Caco-2 (cell line): ENCODE measurements at regions of chr12 and their contacts with region 1.

Region 1: DNA sequence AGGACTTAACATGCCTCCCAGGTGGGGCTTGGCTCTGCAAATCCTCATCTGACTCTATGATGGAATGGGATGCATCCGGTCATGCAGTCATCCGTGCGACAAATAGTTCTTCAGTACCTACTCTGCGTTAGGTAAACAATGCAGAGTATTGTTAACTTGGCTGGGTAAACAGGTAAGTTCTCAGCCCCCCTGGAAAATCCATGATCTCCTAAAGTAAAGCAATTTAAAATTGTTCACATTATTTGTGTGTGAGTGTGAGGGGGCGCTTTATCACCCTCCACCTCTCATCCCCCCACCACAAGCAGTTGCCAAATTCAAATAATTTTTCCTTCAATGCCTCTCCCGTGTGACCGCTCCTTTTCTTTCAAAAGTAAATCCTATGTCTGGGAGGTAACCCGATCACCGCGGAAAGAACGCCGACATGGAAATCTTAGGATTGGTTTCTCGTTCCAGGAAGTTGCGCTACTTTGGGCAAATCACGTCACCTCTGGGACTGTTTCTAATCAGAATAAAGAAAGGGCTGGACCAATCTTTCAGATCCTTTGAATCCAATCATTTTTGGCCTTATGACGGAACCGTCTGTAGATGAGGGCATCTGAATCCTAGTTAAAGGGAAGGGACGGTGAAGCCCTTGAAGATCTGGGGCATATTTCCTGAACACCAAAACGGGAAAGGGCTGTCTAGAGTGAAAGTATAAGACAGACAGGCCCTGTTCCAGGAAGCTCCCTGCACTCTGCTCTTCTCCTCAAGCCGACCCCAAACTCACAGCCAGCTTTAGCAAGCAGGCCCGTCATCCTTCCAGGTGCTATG is 44.0 kb upstream of the SINHCAF start:
- DNase-seq: peak; percentile 72 to 75
- H3K4me3 ChIP-seq: peak overlapping the region; percentile 27
- H3K4me3 Mint-ChIP-seq: peak overlapping the region; percentile 70
- H3K27ac Mint-ChIP-seq: peak overlapping the region; percentile 100
- H3K4me1 ChIP-seq: peaks cover 26% of the 10 kb centered on the region
- H3K4me1 Mint-ChIP-seq: peaks cover 43% of the 10 kb centered on the region
- H3K27me3 ChIP-seq: no peaks in the 10 kb centered on the region
- H3K27me3 Mint-ChIP-seq: no peaks in the 10 kb centered on the region
- CTCF ChIP-seq: no peak

Region 2: GRCh38 chr12:31228811-31229792 is 140.8 kb before region 1 on chr12:
- CTCF ChIA-PET with region 1: no interaction called
- POLR2A ChIA-PET with region 1: no interaction called
- intact Hi-C with region 1: no loop called
- DNase-seq: peak in 1 of 2 experiments; percentile 39
- H3K4me3 ChIP-seq: no peak overlapping the region
- H3K4me3 Mint-ChIP-seq: no peak overlapping the region
- H3K27ac Mint-ChIP-seq: no peak overlapping the region
- H3K4me1 ChIP-seq: 0 out of 2 replicates have a peak, but pooled peaks cover 2% of the 10 kb centered on the region
- H3K4me1 Mint-ChIP-seq: no peaks in the 10 kb centered on the region
- H3K27me3 ChIP-seq: no peaks in the 10 kb centered on the region
- H3K27me3 Mint-ChIP-seq: peaks cover 8% of the 10 kb centered on the region
- CTCF ChIP-seq: no peak

Region 3: GRCh38 chr12:31288381-31288780 is 81.5 kb before region 1 on chr12:
- CTCF ChIA-PET with region 1: no interaction called
- POLR2A ChIA-PET with region 1: no interaction called
- intact Hi-C with region 1: no loop called
- DNase-seq: no peak
- H3K4me3 ChIP-seq: no peak overlapping the region
- H3K4me3 Mint-ChIP-seq: no peak overlapping the region
- H3K27ac Mint-ChIP-seq: peak overlapping the region; percentile 56
- H3K4me1 ChIP-seq: no peaks in the 10 kb centered on the region
- H3K4me1 Mint-ChIP-seq: peaks cover 11% of the 10 kb centered on the region
- H3K27me3 ChIP-seq: no peaks in the 10 kb centered on the region
- H3K27me3 Mint-ChIP-seq: no peaks in the 10 kb centered on the region
- CTCF ChIP-seq: no peak

Region 4: GRCh38 chr12:31339831-31340622 is 29.9 kb before region 1 on chr12:
- CTCF ChIA-PET with region 1: no interaction called
- POLR2A ChIA-PET with region 1: interaction called, 5 read pairs
- intact Hi-C with region 1: loop called (anchors 1 kb)
- DNase-seq: peak; percentile 73 to 87
- H3K4me3 ChIP-seq: no peak overlapping the region
- H3K4me3 Mint-ChIP-seq: no peak overlapping the region
- H3K27ac Mint-ChIP-seq: peak overlapping the region; percentile 68
- H3K4me1 ChIP-seq: peaks cover 36% of the 10 kb centered on the region
- H3K4me1 Mint-ChIP-seq: peaks cover 31% of the 10 kb centered on the region
- H3K27me3 ChIP-seq: no peaks in the 10 kb centered on the region
- H3K27me3 Mint-ChIP-seq: no peaks in the 10 kb centered on the region
- CTCF ChIP-seq: no peak

Region 5: GRCh38 chr12:31353750-31354708 is 15.9 kb before region 1 on chr12:
- CTCF ChIA-PET with region 1: no interaction called
- POLR2A ChIA-PET with region 1: interaction called, 10 read pairs
- intact Hi-C with region 1: loop called (anchors 1 kb)
- DNase-seq: no peak
- H3K4me3 ChIP-seq: no peak overlapping the region
- H3K4me3 Mint-ChIP-seq: no peak overlapping the region
- H3K27ac Mint-ChIP-seq: peak overlapping the region; percentile 14
- H3K4me1 ChIP-seq: peaks cover 13% of the 10 kb centered on the region
- H3K4me1 Mint-ChIP-seq: peaks cover 7% of the 10 kb centered on the region
- H3K27me3 ChIP-seq: no peaks in the 10 kb centered on the region
- H3K27me3 Mint-ChIP-seq: no peaks in the 10 kb centered on the region
- CTCF ChIP-seq: no peak

Region 6: DNA sequence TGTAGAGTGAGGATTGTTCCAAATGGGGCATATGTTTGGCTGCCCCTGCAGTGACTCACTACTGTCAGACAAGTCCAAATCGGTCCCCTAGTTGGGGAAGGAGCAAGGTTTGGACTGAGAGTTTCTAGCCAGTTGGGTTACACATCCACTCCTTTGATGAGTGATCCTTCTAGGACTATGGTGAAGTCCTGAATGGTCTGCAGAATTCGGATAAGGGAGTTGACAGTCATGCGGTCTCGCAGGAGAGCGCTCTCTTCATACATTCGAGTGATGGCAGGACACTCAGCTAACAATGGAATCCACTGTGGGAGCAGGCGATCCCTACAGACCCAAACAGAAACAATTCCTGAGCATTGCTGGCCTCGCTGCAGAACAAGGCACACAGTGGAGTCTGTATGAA is 17.5 kb after region 1 on chr12:
- CTCF ChIA-PET with region 1: interaction called, 6 read pairs
- POLR2A ChIA-PET with region 1: interaction called, 55 read pairs
- intact Hi-C with region 1: loop called (anchors 1 kb)
- DNase-seq: peak in 1 of 2 experiments; percentile 23
- H3K4me3 ChIP-seq: no peak overlapping the region
- H3K4me3 Mint-ChIP-seq: no peak overlapping the region
- H3K27ac Mint-ChIP-seq: peak overlapping the region; percentile 82
- H3K4me1 ChIP-seq: peaks cover 59% of the 10 kb centered on the region
- H3K4me1 Mint-ChIP-seq: peaks cover 50% of the 10 kb centered on the region
- H3K27me3 ChIP-seq: no peaks in the 10 kb centered on the region
- H3K27me3 Mint-ChIP-seq: no peaks in the 10 kb centered on the region
- CTCF ChIP-seq: no peak

Region 7: GRCh38 chr12:31620311-31620710 is 250.4 kb after region 1 on chr12:
- CTCF ChIA-PET with region 1: no interaction called
- POLR2A ChIA-PET with region 1: no interaction called
- intact Hi-C with region 1: loop called (anchors 1 kb)
- DNase-seq: peak; percentile 77 to 88
- H3K4me3 ChIP-seq: no peak overlapping the region
- H3K4me3 Mint-ChIP-seq: peak overlapping the region; percentile 30
- H3K27ac Mint-ChIP-seq: peak overlapping the region; percentile 95
- H3K4me1 ChIP-seq: peaks cover 36% of the 10 kb centered on the region
- H3K4me1 Mint-ChIP-seq: peaks cover 11% of the 10 kb centered on the region
- H3K27me3 ChIP-seq: no peaks in the 10 kb centered on the region
- H3K27me3 Mint-ChIP-seq: no peaks in the 10 kb centered on the region
- CTCF ChIP-seq: no peak